Psoas muscle (tissue), 8 donors: ENCODE measurements at regions of chr1 and their contacts with region 1.

Region 1: GRCh38 chr1:246888522-246888921 is 43.2 kb downstream of the AHCTF1 start:
- DNase-seq: no peak
- ATAC-seq: no peak
- H3K4me3 ChIP-seq: no peak overlapping the region
- H3K27ac ChIP-seq: no peak overlapping the region
- H3K4me1 ChIP-seq: no peaks in the 10 kb centered on the region
- H3K27me3 ChIP-seq: no peaks in the 10 kb centered on the region
- CTCF ChIP-seq: no peak

Region 2: DNA sequence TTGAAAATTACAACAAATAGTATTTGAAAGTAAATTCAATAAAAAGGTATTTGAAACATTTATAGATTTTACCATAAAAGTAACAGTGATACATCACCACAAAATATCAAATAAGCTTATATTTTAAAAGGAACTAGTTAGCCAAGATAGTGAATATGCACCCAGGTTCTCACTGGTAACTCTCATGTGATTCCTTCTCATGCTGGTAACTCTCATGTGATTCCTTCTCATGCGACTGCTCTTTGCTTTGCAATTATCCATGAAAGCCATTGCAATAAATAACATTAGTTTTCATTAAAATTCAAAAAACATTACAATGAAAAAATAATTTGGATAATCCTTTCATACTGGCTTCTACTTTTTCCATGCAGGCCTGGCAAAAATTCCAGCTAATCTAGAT is 32.2 kb before region 1 on chr1:
- intact Hi-C with region 1: loop called in 1 of 2 experiments (anchors 5 kb)
- DNase-seq: no peak
- ATAC-seq: no peak
- H3K4me3 ChIP-seq: no peak overlapping the region
- H3K27ac ChIP-seq: no peak overlapping the region
- H3K4me1 ChIP-seq: no peaks in the 10 kb centered on the region
- H3K27me3 ChIP-seq: no peaks in the 10 kb centered on the region
- CTCF ChIP-seq: no peak